ENCODE measurements at regions of chr3 and their contacts with region 1.

Region 1: GRCh38 chr3:123559040-123559861 is 25.6 kb downstream of the HACD2 start:
- DNase-seq: peak; percentile 56
- CTCF ChIP-seq: peak; percentile 61

Region 2: GRCh38 chr3:123382846-123383746 is 176.2 kb before region 1 on chr3:
- CTCF ChIA-PET with region 1: no interaction called
- POLR2A ChIA-PET with region 1: no interaction called
- DNase-seq: no peak
- CTCF ChIP-seq: no peak

Region 3: DNA sequence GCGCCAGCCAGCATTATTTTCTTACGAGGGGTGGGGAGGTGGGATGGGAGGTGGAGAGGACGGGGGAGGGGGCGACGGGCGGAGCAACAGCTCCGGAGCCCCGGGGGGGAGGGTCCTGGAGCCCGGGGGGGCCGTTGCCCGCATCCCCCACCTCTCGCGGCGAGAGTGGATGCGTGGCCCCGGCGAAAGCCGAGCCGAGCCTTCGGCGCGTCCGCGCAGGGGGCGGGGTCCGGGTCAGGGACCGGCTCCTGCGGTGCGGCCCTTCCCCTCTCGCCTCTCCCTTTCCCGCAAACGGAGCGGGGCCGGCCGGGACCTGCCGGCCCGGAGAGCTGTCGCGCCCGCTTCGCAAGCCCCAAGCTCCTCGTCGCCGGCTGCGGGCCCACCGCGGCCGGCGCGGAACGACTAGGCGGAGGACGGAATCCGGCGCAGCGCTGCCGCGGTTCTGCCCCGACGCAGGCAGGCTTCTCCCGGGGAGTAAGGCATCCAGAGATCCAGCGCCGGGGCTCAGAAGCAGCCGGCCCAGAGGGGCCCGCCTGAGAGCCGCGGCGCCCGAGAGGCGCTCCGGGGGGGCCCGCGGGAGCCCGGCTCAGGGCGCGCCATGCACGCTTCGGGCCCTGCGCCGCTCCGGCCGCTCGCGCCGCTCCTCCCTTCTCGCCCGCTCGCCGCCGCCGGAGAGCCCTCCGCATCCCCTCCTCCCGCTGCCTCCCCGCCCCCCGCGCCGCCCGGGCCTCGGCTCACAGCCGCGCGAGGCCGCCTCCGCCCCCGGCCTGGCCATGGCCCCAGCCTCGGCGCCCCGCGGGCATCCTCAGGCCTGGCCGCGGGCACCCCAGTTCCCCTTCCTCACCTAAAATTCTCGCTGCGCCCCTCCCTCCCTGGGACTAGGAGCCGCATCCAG is 109.9 kb before region 1 on chr3:
- CTCF ChIA-PET with region 1: interaction called, 32 read pairs
- POLR2A ChIA-PET with region 1: no interaction called
- DNase-seq: peak; percentile 38
- CTCF ChIP-seq: no peak

Region 4: DNA sequence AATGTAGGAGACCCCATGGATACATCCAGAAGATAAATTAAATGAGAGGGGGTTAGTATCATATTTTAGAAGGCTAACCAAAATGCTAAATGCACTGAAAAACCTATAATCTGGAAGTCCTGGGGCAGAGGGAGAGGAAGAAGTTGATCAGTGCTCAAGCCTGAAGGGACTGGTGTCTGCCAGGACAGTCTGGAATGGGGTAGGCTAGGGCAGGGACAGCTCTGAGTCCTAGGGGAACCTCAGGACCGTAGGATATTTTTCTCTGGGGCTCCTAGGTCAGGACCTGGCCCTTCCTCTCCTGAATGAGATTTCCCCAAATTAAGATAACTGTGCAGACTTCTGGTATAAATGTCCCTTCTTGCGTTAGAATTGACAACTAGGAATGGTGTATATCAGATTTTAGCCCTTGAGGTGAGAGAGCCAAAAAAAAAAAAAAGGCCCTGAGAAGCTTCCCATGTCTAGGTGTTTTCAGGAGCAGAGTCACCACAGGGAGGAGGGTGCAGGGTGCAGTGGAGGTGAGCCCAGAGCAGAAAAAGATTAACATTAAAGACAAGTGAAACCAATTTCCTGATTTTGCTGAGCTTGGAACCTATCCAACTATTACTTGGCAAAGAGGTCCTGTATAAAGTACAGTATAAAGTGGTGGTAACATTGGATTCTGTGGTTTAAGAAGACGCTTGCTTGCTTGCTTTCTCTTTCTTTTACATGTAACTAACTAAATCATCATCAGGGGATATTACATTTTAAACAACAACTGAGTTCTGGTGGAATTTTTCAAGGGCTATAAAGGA is 37.9 kb before region 1 on chr3:
- CTCF ChIA-PET with region 1: interaction called, 10 read pairs
- POLR2A ChIA-PET with region 1: no interaction called
- DNase-seq: no peak
- CTCF ChIP-seq: no peak

Region 5: GRCh38 chr3:123540285-123540684 is 19.0 kb before region 1 on chr3:
- CTCF ChIA-PET with region 1: interaction called, 36 read pairs
- POLR2A ChIA-PET with region 1: no interaction called
- DNase-seq: no peak
- CTCF ChIP-seq: no peak

Region 6: GRCh38 chr3:123576122-123576521 is 16.9 kb after region 1 on chr3:
- CTCF ChIA-PET with region 1: interaction called, 71 read pairs
- POLR2A ChIA-PET with region 1: no interaction called
- DNase-seq: peak; percentile 32
- CTCF ChIP-seq: no peak

Region 7: GRCh38 chr3:123949641-123950040 is 390.4 kb after region 1 on chr3:
- CTCF ChIA-PET with region 1: no interaction called
- POLR2A ChIA-PET with region 1: no interaction called
- DNase-seq: no peak
- CTCF ChIP-seq: no peak

Measured in GM10248 (cell line).